Caco-2 (cell line): ENCODE measurements at regions of chr3 and their contacts with region 1.

Region 1: DNA sequence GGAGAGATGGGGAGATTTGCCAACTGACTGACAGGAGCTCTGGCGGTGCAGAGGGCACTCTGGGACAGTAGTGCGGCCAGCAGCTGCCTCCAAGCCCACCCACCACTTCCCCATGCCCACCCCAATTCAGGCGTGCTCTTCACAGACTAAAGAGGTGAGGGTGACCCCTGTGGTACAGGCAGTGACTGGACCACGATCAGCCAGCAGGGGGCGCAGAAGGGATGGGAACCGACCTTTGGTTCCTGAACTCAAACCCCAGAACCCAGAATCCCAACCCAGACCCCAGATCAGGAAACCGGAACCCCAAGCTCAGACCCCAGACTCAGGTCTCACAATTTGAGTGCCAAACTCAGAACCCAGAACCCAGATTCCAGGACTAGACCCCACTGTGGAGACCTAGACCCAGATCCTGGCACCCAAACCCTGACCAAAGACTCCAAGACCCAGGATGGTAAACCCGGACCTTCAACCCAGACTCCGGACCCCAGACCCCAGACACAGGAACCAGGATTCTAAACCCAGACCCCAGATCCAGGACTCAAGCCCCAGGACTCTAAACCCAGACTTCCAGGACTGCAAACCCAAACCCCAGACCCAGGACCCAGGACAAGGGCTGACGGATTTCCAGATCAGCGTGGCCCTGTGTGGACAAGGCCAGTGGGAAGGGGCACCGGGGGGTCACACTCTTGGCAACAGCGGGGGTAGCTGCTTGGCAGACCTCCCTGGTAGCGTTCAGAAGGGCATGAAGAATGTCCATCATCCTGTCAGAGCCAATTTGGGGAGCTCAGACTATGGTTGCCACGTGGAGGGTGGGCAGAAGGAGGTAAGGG is 3.7 kb upstream of the MYL3 start:
- DNase-seq: peak; percentile 69 to 80
- H3K4me3 ChIP-seq: no peak overlapping the region
- H3K4me3 Mint-ChIP-seq: no peak overlapping the region
- H3K27ac Mint-ChIP-seq: no peak overlapping the region
- H3K4me1 ChIP-seq: peaks cover 33% of the 10 kb centered on the region
- H3K4me1 Mint-ChIP-seq: peaks cover 22% of the 10 kb centered on the region
- H3K27me3 ChIP-seq: no peaks in the 10 kb centered on the region
- H3K27me3 Mint-ChIP-seq: no peaks in the 10 kb centered on the region
- CTCF ChIP-seq: peak; percentile 80 to 94

Region 2: DNA sequence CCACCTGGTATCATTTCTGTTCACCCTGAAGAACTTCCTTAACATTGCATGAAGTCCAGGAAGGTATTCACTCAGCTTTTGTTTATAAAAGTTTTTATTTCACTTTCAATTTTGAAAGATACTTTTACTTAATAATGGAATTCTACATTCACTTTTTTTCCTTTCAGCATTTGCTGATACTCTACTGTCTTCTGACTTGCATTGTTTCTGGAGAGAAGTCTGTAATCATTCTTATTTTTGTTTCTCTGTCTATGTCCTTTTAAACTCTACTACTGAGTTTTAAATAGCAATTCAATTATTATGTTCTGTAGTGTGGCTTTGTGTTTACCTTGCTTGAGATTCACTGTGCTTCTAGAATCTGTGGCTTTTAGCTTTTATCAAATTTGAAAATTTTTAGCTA is 46.1 kb before region 1 on chr3:
- CTCF ChIA-PET with region 1: no interaction called
- POLR2A ChIA-PET with region 1: no interaction called
- intact Hi-C with region 1: no loop called
- DNase-seq: no peak
- H3K4me3 ChIP-seq: no peak overlapping the region
- H3K4me3 Mint-ChIP-seq: no peak overlapping the region
- H3K27ac Mint-ChIP-seq: no peak overlapping the region
- H3K4me1 ChIP-seq: no peaks in the 10 kb centered on the region
- H3K4me1 Mint-ChIP-seq: no peaks in the 10 kb centered on the region
- H3K27me3 ChIP-seq: no peaks in the 10 kb centered on the region
- H3K27me3 Mint-ChIP-seq: no peaks in the 10 kb centered on the region
- CTCF ChIP-seq: no peak

Region 3: GRCh38 chr3:46878789-46879436 is 12.0 kb after region 1 on chr3:
- CTCF ChIA-PET with region 1: no interaction called
- POLR2A ChIA-PET with region 1: no interaction called
- intact Hi-C with region 1: loop called (anchors 2 kb)
- DNase-seq: peak; percentile 86 to 95
- H3K4me3 ChIP-seq: no peak overlapping the region
- H3K4me3 Mint-ChIP-seq: no peak overlapping the region
- H3K27ac Mint-ChIP-seq: peak overlapping the region; percentile 60
- H3K4me1 ChIP-seq: peaks cover 56% of the 10 kb centered on the region
- H3K4me1 Mint-ChIP-seq: peaks cover 10% of the 10 kb centered on the region
- H3K27me3 ChIP-seq: no peaks in the 10 kb centered on the region
- H3K27me3 Mint-ChIP-seq: peaks cover 5% of the 10 kb centered on the region
- CTCF ChIP-seq: no peak

Region 4: GRCh38 chr3:46947981-46948791 is 81.3 kb after region 1 on chr3:
- CTCF ChIA-PET with region 1: no interaction called
- POLR2A ChIA-PET with region 1: no interaction called
- intact Hi-C with region 1: no loop called
- DNase-seq: peak; percentile 90 to 96
- H3K4me3 ChIP-seq: no peak overlapping the region
- H3K4me3 Mint-ChIP-seq: peak overlapping the region; percentile 57
- H3K27ac Mint-ChIP-seq: peak overlapping the region; percentile 95
- H3K4me1 ChIP-seq: peaks cover 64% of the 10 kb centered on the region
- H3K4me1 Mint-ChIP-seq: peaks cover 65% of the 10 kb centered on the region
- H3K27me3 ChIP-seq: no peaks in the 10 kb centered on the region
- H3K27me3 Mint-ChIP-seq: no peaks in the 10 kb centered on the region
- CTCF ChIP-seq: no peak